HepG2 (cell line): ENCODE measurements at regions of chr17 and their contacts with region 1.

Region 1: DNA sequence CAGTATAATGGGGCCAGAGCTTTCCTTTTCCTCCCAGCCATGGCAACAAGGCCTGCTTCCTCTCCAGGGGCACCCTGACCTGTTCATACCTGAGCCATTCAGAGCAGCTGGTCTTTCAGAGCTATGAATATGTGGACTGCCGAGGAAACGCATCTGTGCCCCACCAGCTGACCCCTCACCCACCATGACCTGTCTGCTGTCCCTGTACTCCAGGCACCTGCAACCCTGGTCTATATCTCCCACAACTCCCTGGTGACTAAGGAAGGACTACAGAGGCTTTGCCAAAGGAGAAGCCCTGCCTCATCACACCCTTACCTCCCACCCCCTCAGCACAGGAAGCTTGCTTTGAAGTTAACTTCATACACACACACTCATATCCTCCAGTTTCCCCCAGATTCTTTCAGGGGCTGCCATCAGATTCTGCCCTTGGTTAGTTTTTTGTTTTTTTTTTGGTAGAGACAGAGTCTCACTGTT is 6.0 kb downstream of the TMEM106A start:
- DNase-seq: no peak
- ATAC-seq: peak; percentile 3; the same call in 2 of the 3 replicates
- H3K4me3 ChIP-seq: no peak overlapping the region
- H3K27ac ChIP-seq: peak overlapping the region; percentile 94
- H3K4me1 ChIP-seq: peaks cover 70% of the 10 kb centered on the region
- H3K27me3 ChIP-seq: no peaks in the 10 kb centered on the region
- CTCF ChIP-seq: no peak
- EP300 ChIP-seq: no peak
- POLR2A ChIP-seq: no peak; a peak in 1 of 4 replicates
- RAD21 ChIP-seq: no peak

Region 2: GRCh38 chr17:43006639-43007551 is 210.8 kb before region 1 on chr17 and contains the start of gene IFI35:
- CTCF ChIA-PET with region 1: no interaction called
- POLR2A ChIA-PET with region 1: interaction called, 12 read pairs
- in situ Hi-C with region 1: no loop called
- intact Hi-C with region 1: no loop called
- DNase-seq: peak; percentile 83
- ATAC-seq: peak; percentile 78
- H3K4me3 ChIP-seq: peak within 1 kb of the TSS; percentile 71 to 92 (median 88)
- H3K27ac ChIP-seq: peak within 1 kb of the TSS; percentile 92
- H3K4me1 ChIP-seq: peaks cover 81% of the 10 kb centered on the region
- H3K27me3 ChIP-seq: no peaks in the 10 kb centered on the region; a peak in 1 of 5 replicates
- CTCF ChIP-seq: peak; percentile 97
- EP300 ChIP-seq: no peak
- POLR2A ChIP-seq: peak; percentile 75 to 76
- RAD21 ChIP-seq: peak; percentile 88
- total RNA-seq, gene IFI35: 38.1 and 40.2 TPM in 2 replicates

Region 3: GRCh38 chr17:43042025-43042628 is 175.5 kb before region 1 on chr17:
- CTCF ChIA-PET with region 1: no interaction called
- POLR2A ChIA-PET with region 1: no interaction called
- in situ Hi-C with region 1: no loop called
- intact Hi-C with region 1: no loop called
- DNase-seq: no peak
- ATAC-seq: no peak
- H3K4me3 ChIP-seq: no peak overlapping the region
- H3K27ac ChIP-seq: no peak overlapping the region
- H3K4me1 ChIP-seq: peaks cover 27% of the 10 kb centered on the region
- H3K27me3 ChIP-seq: no peaks in the 10 kb centered on the region
- CTCF ChIP-seq: no peak
- EP300 ChIP-seq: no peak
- POLR2A ChIP-seq: no peak
- RAD21 ChIP-seq: no peak

Region 4: GRCh38 chr17:43085474-43085873 is 132.2 kb before region 1 on chr17:
- CTCF ChIA-PET with region 1: no interaction called
- POLR2A ChIA-PET with region 1: no interaction called
- in situ Hi-C with region 1: no loop called
- intact Hi-C with region 1: no loop called
- DNase-seq: peak; percentile 9
- ATAC-seq: no peak
- H3K4me3 ChIP-seq: no peak overlapping the region
- H3K27ac ChIP-seq: no peak overlapping the region
- H3K4me1 ChIP-seq: no peaks in the 10 kb centered on the region
- H3K27me3 ChIP-seq: no peaks in the 10 kb centered on the region
- CTCF ChIP-seq: no peak
- EP300 ChIP-seq: no peak
- POLR2A ChIP-seq: no peak
- RAD21 ChIP-seq: no peak

Region 5: GRCh38 chr17:43118679-43119615 is 98.7 kb before region 1 on chr17:
- CTCF ChIA-PET with region 1: no interaction called
- POLR2A ChIA-PET with region 1: interaction called, 14 read pairs
- in situ Hi-C with region 1: no loop called
- intact Hi-C with region 1: no loop called
- DNase-seq: peak; percentile 65
- ATAC-seq: peak; percentile 68
- H3K4me3 ChIP-seq: no peak overlapping the region
- H3K27ac ChIP-seq: peak overlapping the region; percentile 42
- H3K4me1 ChIP-seq: peaks cover 68% of the 10 kb centered on the region
- H3K27me3 ChIP-seq: no peaks in the 10 kb centered on the region
- CTCF ChIP-seq: no peak
- EP300 ChIP-seq: no peak
- POLR2A ChIP-seq: no peak
- RAD21 ChIP-seq: no peak

Region 6: GRCh38 chr17:43134774-43135453 is 82.7 kb before region 1 on chr17:
- CTCF ChIA-PET with region 1: no interaction called
- POLR2A ChIA-PET with region 1: interaction called, 11 read pairs
- in situ Hi-C with region 1: no loop called
- intact Hi-C with region 1: no loop called
- DNase-seq: peak; percentile 92
- ATAC-seq: peak; percentile 98
- H3K4me3 ChIP-seq: peak overlapping the region in 1 of 3 experiments; percentile 18; a peak in 2 of 6 replicates
- H3K27ac ChIP-seq: peak overlapping the region; percentile 79
- H3K4me1 ChIP-seq: peaks cover 54% of the 10 kb centered on the region
- H3K27me3 ChIP-seq: no peaks in the 10 kb centered on the region
- CTCF ChIP-seq: no peak
- EP300 ChIP-seq: peak; percentile 36 to 85; a peak in 2 of 4 replicates
- POLR2A ChIP-seq: peak; percentile 44 to 58; a peak in 3 of 4 replicates
- RAD21 ChIP-seq: peak; percentile 51

Region 7: GRCh38 chr17:43200127-43200526 is 17.5 kb before region 1 on chr17:
- CTCF ChIA-PET with region 1: no interaction called
- POLR2A ChIA-PET with region 1: interaction called, 44 read pairs
- in situ Hi-C with region 1: no loop called
- intact Hi-C with region 1: no loop called
- DNase-seq: no peak
- ATAC-seq: peak; percentile 68
- H3K4me3 ChIP-seq: no peak overlapping the region
- H3K27ac ChIP-seq: no peak overlapping the region
- H3K4me1 ChIP-seq: peaks cover 14% of the 10 kb centered on the region; the same call in 1 of the 2 replicates
- H3K27me3 ChIP-seq: no peaks in the 10 kb centered on the region
- CTCF ChIP-seq: peak; percentile 26
- EP300 ChIP-seq: no peak
- POLR2A ChIP-seq: no peak
- RAD21 ChIP-seq: no peak

Region 8: DNA sequence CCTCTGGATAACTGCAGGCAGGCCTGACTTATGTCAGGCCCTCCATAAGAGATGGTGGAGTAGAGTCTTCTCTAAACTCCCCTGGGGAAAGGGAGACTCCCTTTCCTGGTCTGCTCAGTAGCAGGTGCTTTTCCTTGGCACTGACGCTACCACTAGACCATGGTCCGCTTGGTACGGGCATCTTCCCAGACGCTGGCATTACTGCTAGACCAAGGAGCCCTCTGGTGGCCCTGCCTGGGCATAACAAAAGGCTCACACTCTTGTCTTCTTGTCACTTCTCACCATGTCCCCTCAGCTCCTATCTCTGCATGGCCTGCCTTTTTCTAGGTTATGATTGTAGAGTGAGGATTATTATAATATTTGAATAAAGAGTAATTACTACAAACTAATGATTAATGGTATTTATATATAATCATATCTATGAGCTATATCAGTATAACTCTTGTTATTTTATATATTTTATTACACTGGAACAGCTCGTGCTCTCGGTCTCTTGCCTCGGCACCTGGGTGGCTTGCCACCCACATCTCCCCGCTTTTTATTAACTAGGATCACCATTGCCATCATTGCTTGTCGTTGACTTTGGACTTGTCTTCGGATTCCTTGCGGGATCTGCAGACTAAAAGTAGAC is 121.3 kb after region 1 on chr17:
- CTCF ChIA-PET with region 1: no interaction called
- POLR2A ChIA-PET with region 1: no interaction called
- in situ Hi-C with region 1: no loop called
- intact Hi-C with region 1: no loop called
- DNase-seq: peak; percentile 51
- ATAC-seq: no peak
- H3K4me3 ChIP-seq: no peak overlapping the region
- H3K27ac ChIP-seq: no peak overlapping the region
- H3K4me1 ChIP-seq: peaks cover 2% of the 10 kb centered on the region
- H3K27me3 ChIP-seq: no peaks in the 10 kb centered on the region
- CTCF ChIP-seq: peak; percentile 80
- EP300 ChIP-seq: no peak
- POLR2A ChIP-seq: no peak
- RAD21 ChIP-seq: peak; percentile 67; the same call in 1 of the 2 replicates